ENCODE measurements at regions of chr15 and their contacts with region 1.

Region 1: DNA sequence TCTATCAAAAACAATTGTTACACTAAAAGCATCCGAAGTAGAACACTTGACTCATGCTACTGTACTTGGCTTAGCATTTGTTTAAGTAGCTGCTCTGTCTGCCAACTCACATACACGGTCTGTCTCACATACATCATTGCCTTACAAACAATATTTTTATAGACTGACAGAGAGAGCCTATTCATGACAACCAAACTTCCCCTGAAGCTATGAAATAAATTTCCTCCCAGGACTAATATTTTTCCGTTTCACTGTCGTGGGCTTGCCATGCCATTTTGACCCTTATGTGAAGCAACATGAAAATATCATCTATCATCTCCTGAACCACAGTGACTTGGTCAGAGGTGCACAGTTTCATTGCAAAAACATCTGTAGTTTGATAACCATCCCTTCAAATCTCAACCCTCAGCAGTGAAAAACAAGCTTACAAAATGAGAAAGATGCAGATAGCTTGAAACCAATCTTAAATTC is 66.5 kb upstream of the PYGO1 start:
- DNase-seq: no peak
- ATAC-seq: no peak
- H3K4me3 ChIP-seq: no peak overlapping the region
- H3K27ac ChIP-seq: no peak overlapping the region
- H3K4me1 ChIP-seq: no peaks in the 10 kb centered on the region
- H3K27me3 ChIP-seq: no peaks in the 10 kb centered on the region
- CTCF ChIP-seq: no peak
- POLR2A ChIP-seq: no peak

Region 2: GRCh38 chr15:55703873-55704285 is 49.3 kb after region 1 on chr15:
- intact Hi-C with region 1: no loop called
- DNase-seq: no peak
- ATAC-seq: no peak
- H3K4me3 ChIP-seq: no peak overlapping the region
- H3K27ac ChIP-seq: no peak overlapping the region
- H3K4me1 ChIP-seq: no peaks in the 10 kb centered on the region
- H3K27me3 ChIP-seq: no peaks in the 10 kb centered on the region
- CTCF ChIP-seq: no peak
- POLR2A ChIP-seq: no peak

Region 3: GRCh38 chr15:55742927-55743728 is 88.5 kb after region 1 on chr15 and contains the start of gene PRTG:
- intact Hi-C with region 1: loop called in 3 of 10 experiments (anchors 5 to 10 kb)
- DNase-seq: peak; percentile 74 to 87 (median 79)
- ATAC-seq: peak; percentile 85 to 98 (median 95)
- H3K4me3 ChIP-seq: peak within 1 kb of the TSS; percentile 63 to 92 (median 78)
- H3K27ac ChIP-seq: peak within 1 kb of the TSS; percentile 37 to 86 (median 72)
- H3K4me1 ChIP-seq: peaks cover 0 to 25% (median 9%) of the 10 kb centered on the region in 12 donors
- H3K27me3 ChIP-seq: peaks cover 0 to 52% (median 10%) of the 10 kb centered on the region in 9 donors
- CTCF ChIP-seq: no peak
- POLR2A ChIP-seq: no peak
- total RNA-seq, gene PRTG: 0.58 to 2.1 (median 1.2) TPM

Region 4: GRCh38 chr15:55799291-55800212 is 145.0 kb after region 1 on chr15:
- intact Hi-C with region 1: loop called in 8 of 10 experiments (anchors 1 to 5 kb)
- DNase-seq: no peak
- ATAC-seq: no peak
- H3K4me3 ChIP-seq: no peak overlapping the region
- H3K27ac ChIP-seq: no peak overlapping the region
- H3K4me1 ChIP-seq: no peaks in the 10 kb centered on the region
- H3K27me3 ChIP-seq: no peaks in the 10 kb centered on the region
- CTCF ChIP-seq: peak in 11 of 12 donors; percentile 24 to 57 (median 45)
- POLR2A ChIP-seq: no peak